Lower lobe of right lung (tissue), 2 donors: ENCODE measurements at regions of chr4 and their contacts with region 1.

Region 1: DNA sequence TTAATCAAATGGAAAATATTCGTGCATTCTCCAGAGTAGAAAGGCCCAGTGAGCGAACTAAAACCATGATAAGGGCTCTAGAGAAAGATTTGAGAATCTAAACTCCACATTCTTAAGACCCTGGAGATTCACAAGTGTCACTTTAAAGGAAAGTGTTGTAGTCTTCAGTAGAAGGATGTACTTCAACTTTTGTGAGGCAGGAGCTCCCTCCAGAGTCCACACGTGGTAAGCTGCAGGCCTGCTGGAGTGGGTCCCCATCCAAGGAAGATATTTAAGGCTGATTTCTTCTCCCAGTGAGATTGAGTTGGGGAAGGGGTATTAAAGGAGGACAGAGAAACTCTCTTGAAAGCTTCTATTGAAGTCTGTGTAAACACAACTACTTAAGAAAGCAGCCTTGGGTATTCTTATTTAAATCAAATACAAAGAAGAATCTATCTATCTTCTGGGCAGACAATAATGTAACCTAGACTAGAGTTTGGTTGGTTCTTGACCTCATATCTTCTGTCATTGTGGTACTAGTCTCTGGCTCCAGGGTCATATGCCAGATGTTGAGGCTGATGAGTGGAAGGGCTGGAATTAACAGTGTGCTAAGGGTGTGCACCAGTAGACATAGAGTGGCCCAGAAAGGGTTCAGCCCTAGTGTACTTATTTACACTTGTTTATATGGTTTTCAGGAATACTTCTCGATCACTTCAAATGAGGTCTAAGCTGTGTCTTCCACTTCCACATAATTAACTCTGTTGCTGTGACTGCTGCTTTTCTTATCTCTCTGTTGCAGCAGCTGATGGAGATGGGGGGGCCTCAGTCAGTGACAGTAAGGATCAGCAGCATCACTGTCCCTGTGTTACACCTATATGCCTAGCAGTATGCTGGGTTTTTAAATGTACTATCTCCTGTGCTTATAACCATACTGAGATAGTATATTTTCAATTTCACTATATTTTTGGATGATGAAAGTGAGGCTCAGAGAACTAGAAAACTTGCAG is 76.1 kb downstream of the HMGB2 start:
- DNase-seq: peak; percentile 51
- ATAC-seq: peak; percentile 84 to 91
- H3K4me3 ChIP-seq: no peak overlapping the region
- H3K27ac ChIP-seq: no peak overlapping the region
- H3K4me1 ChIP-seq: no peaks in the 10 kb centered on the region
- H3K27me3 ChIP-seq: no peaks in the 10 kb centered on the region
- CTCF ChIP-seq: peak; percentile 77

Region 2: GRCh38 chr4:173025131-173025530 is 232.9 kb before region 1 on chr4:
- intact Hi-C with region 1: loop called (anchors 10 kb)
- DNase-seq: no peak
- ATAC-seq: peak; percentile 53 to 70
- H3K4me3 ChIP-seq: no peak overlapping the region
- H3K27ac ChIP-seq: no peak overlapping the region
- H3K4me1 ChIP-seq: no peaks in the 10 kb centered on the region
- H3K27me3 ChIP-seq: no peaks in the 10 kb centered on the region
- CTCF ChIP-seq: peak; percentile 66

Region 3: DNA sequence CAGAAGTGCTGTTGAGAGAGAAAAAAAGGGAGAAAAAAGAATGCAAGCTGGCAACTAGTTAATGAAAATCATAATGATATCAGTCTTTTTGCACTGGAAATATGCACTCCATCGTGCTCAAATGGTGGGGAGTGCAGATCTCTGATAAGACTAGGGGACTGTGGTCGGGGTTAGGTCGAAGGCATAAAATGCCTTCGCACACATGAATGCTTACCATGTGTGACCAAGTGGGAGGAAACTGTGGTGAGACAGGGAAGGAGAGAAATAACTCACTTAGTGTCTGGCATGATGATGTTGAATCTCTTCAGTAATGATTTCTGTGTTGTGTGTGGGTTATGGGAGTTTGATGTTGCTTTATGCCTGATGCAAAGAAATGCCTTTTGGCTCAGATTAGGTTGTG is 666.5 kb after region 1 on chr4:
- intact Hi-C with region 1: no loop called
- DNase-seq: no peak
- ATAC-seq: no peak
- H3K4me3 ChIP-seq: no peak overlapping the region
- H3K27ac ChIP-seq: no peak overlapping the region
- H3K4me1 ChIP-seq: no peaks in the 10 kb centered on the region
- H3K27me3 ChIP-seq: no peaks in the 10 kb centered on the region
- CTCF ChIP-seq: no peak